HCT116 (cell line): ENCODE measurements at regions of chrX and their contacts with region 1.

Region 1: DNA sequence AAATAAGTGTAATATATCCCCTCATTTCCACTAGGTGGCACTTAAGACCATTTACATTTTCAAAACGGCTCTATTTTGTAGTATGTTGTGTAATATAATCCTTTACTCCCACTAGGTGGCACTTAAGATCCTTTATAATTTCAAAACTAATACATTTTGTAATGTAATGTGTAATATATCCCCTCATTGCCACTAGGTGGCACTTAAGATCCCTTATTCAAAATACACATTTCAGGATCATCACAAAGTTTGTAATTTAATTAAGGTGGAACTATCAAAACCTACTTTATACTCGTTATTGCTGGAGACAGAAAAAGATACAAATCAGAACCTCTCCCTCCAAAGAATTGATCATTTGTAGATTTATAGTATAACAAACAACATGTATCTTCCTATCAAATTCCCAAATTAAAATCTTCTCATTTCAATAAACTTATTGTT is 132.5 kb downstream of the ARHGAP6 start:
- DNase-seq: peak; percentile 65
- ATAC-seq: peak; percentile 78
- H3K4me3 ChIP-seq: no peak overlapping the region
- H3K27ac ChIP-seq: no peak overlapping the region
- H3K4me1 ChIP-seq: no peaks in the 10 kb centered on the region
- H3K27me3 ChIP-seq: no peaks in the 10 kb centered on the region
- CTCF ChIP-seq: peak; percentile 41 to 99 (median 66); a peak in 5 of 6 replicates
- POLR2A ChIP-seq: no peak
- RAD21 ChIP-seq: peak; percentile 70

Region 2: DNA sequence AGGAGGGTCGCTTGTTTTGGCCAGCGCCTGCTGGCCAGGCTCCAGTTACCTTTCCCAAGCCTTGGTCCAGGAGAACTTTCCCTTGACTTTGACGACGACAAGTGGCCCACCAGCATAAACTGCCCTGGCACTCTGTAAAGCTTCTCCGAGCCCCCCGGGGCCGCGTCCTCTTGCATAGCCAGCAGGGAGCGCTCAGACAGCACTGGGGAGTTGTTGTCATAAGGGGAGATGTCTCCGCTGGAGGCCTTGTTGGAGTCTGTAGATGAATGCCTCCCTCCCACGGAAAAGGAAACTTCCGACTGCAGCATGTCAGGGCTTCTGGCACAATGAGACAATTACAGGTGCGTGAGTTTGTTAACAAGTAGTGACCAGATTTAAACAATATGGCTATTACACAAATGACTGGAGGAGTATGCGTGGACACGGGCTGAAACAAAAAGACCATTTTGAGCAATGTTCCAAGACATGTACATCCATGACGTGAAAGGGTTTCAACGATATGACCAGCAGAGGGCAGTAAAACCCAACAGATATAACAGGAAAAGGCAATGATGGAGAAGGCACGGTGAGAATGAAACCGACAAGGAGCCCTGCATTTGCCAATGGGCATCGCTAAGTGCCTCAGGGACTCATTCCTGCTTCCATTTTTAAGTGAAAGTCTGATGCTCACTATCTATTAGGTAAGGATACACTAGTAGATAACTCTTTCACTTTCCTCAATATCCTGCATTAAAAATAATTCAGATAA is 389.1 kb before region 1 on chrX:
- CTCF ChIA-PET with region 1: no interaction called
- POLR2A ChIA-PET with region 1: no interaction called
- RAD21 ChIA-PET with region 1: no interaction called
- intact Hi-C with region 1: loop called (anchors 2 kb)
- DNase-seq: peak; percentile 63
- ATAC-seq: peak; percentile 86
- H3K4me3 ChIP-seq: no peak overlapping the region
- H3K27ac ChIP-seq: no peak overlapping the region
- H3K4me1 ChIP-seq: no peaks in the 10 kb centered on the region
- H3K27me3 ChIP-seq: no peaks in the 10 kb centered on the region
- CTCF ChIP-seq: peak; percentile 38 to 57 (median 52)
- POLR2A ChIP-seq: no peak
- RAD21 ChIP-seq: peak; percentile 66

Region 3: DNA sequence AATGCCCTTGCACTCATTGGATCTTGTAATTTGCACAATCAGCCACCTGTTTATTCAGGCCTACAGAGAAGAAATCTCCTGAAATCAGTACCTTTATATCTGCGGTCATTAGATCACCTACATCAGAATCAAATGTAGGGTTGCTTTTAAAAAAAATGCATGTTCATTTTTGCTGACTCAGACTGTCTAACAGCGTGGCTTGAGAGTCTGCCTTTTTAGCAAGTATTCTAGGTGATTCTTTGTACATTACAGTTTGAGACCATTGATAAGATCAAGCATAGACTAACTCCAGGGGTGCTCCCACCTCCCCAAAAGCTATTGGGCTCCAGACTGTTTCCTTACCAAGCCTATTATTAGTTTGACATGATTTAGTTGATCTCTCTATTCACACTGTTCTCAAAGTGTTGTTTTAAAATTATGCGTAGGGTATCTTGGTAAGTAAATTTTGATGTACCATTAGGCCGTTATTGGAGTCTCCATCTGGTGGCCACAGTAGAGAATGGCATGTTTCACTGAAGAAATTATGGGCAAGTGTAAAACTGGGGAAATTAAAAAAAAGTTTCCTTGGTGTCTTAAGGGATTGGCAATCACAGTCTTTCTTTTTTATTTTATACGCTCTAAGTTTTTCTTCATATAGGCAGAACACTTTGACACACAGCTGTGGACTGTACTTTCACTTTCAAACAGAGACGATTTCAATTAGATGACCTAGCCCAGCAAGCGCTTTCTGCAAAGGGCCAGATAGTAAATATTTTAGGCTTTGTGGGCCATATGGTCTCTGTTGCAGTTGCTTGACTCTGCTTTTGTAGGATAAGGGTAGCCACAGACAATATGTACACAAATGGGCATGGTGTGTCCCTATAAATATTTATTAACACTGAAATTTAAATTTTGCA is 191.1 kb after region 1 on chrX:
- CTCF ChIA-PET with region 1: no interaction called
- POLR2A ChIA-PET with region 1: no interaction called
- RAD21 ChIA-PET with region 1: no interaction called
- intact Hi-C with region 1: loop called (anchors 1 kb)
- DNase-seq: peak; percentile 7
- ATAC-seq: no peak
- H3K4me3 ChIP-seq: no peak overlapping the region
- H3K27ac ChIP-seq: no peak overlapping the region
- H3K4me1 ChIP-seq: no peaks in the 10 kb centered on the region
- H3K27me3 ChIP-seq: no peaks in the 10 kb centered on the region
- CTCF ChIP-seq: peak; percentile 48 to 60 (median 54); a peak in 4 of 6 replicates
- POLR2A ChIP-seq: no peak
- RAD21 ChIP-seq: peak; percentile 38; the same call in 1 of the 2 replicates

Region 4: DNA sequence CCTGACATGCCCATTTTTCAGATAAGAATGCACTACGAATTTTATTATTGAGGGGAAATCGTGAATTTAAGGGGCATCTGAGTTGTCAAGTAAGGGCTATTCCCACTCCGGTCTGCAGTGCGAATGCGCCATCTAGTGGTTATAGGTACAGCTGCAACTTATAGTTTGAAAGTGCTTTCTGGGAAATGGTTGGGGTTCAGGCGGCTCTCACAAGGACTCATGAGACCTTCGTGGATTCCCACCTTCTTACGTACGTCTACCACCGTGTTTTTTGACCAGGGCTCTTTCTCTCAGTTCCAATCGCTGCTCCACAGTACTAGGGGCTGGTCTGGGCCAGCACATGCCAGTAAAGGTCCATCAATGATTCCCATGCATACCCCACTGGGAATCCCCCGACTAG is 237.1 kb after region 1 on chrX:
- CTCF ChIA-PET with region 1: interaction called, 3 read pairs
- POLR2A ChIA-PET with region 1: no interaction called
- RAD21 ChIA-PET with region 1: no interaction called
- intact Hi-C with region 1: loop called (anchors 1 kb)
- DNase-seq: peak; percentile 22
- ATAC-seq: peak; percentile 80
- H3K4me3 ChIP-seq: no peak overlapping the region
- H3K27ac ChIP-seq: no peak overlapping the region
- H3K4me1 ChIP-seq: no peaks in the 10 kb centered on the region
- H3K27me3 ChIP-seq: no peaks in the 10 kb centered on the region
- CTCF ChIP-seq: peak; percentile 66 to 80 (median 76)
- POLR2A ChIP-seq: no peak
- RAD21 ChIP-seq: peak; percentile 67

Region 5: GRCh38 chrX:12701628-12702027 is 1168.4 kb after region 1 on chrX:
- CTCF ChIA-PET with region 1: no interaction called
- POLR2A ChIA-PET with region 1: no interaction called
- RAD21 ChIA-PET with region 1: no interaction called
- intact Hi-C with region 1: loop called (anchors 5 kb)
- DNase-seq: peak; percentile 62
- ATAC-seq: peak; percentile 91
- H3K4me3 ChIP-seq: no peak overlapping the region
- H3K27ac ChIP-seq: no peak overlapping the region
- H3K4me1 ChIP-seq: no peaks in the 10 kb centered on the region
- H3K27me3 ChIP-seq: 0 out of 2 replicates have a peak, but pooled peaks cover 3% of the 10 kb centered on the region
- CTCF ChIP-seq: peak; percentile 42 to 58 (median 52); a peak in 5 of 6 replicates
- POLR2A ChIP-seq: no peak
- RAD21 ChIP-seq: peak; percentile 69